ENCODE measurements at regions of chr11 and their contacts with region 1.

Region 1: DNA sequence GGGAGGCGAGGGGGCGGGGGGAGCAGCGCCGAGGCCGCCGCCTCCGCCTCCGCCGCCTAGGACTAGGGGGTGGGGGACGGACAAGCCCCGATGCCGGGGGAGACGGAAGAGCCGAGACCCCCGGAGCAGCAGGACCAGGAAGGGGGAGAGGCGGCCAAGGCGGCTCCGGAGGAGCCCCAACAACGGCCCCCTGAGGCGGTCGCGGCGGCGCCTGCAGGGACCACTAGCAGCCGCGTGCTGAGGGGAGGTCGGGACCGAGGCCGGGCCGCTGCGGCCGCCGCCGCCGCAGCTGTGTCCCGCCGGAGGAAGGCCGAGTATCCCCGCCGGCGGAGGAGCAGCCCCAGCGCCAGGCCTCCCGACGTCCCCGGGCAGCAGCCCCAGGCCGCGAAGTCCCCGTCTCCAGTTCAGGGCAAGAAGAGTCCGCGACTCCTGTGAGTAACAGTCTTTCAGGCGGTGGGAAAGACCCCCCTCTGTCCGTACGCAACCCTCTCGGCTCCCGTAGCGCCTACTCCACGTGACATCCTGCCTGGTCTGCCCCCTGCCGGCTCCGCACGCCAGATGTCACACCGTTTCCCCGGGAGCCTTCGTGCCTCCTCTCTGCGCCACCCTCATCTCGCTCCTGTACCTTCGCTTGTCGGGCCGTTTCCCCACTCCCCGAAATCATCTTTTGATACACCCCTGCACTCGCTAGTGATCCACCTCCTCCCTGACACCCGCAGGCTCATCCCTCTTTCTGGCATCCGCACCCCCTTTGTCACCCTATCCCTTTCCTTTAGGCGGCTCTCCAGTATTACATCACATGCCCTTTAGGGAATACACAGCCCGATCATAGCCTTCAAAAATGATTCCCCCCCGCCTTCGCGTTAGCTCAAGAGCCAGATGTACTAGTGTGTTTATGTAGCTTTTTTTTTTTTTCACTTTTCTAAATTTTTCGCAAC is 598 bp downstream of the ZFP91 start:
- DNase-seq: peak; percentile 90 to 91
- ATAC-seq: peak; percentile 54 to 58
- H3K4me3 ChIP-seq: peak overlapping the region; percentile 85 to 95 (median 94)
- H3K27ac ChIP-seq: peak overlapping the region; percentile 98 to 100 (median 100)
- H3K4me1 ChIP-seq: peaks cover 72 to 73% of the 10 kb centered on the region in 2 donors
- H3K27me3 ChIP-seq: no peaks in the 10 kb centered on the region
- CTCF ChIP-seq: peak; percentile 72 to 93 (median 88)
- POLR2A ChIP-seq: peak; percentile 79 to 80

Region 2: DNA sequence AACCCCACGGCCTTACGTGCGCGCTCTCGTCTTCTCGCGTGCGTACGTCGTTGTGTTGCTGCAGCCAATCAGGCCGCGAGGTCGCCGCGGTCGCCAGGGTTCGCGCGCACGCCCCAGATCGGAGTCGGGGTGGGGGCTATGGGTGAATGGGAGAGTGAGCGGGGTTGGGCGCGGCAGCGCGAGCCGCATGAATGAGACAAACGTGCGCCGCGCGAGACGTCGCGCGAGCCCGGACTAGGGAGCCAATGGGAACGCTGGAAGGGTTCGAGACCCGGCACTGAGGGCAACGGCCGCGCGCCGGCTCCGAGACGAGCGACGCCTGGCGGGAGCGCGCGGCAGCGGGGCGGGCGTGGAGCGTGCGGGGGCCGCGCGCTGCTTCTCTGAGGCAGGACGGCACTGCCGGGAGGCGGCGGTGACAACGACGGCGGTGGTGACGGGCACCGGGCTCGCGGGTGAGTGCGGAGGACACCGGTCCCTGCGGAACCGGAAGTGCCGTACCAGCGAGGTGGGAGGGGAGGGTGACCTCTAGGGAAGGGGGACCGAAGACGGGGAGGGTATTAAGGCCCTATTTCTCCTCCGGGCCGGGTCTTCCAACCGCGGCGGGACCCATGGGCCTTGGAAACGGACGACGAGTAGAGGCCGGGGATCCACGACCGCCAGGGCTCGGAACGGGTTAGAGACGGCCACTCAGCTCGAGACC is 911.6 kb before region 1 on chr11 and contains the start of gene ZDHHC5:
- in situ Hi-C with region 1: loop called in 1 of 4 experiments (anchors 25 kb)
- intact Hi-C with region 1: loop called (anchors 2 kb)
- DNase-seq: peak; percentile 99
- ATAC-seq: peak; percentile 90 to 92
- H3K4me3 ChIP-seq: peak within 1 kb of the TSS; percentile 70 to 85 (median 76)
- H3K27ac ChIP-seq: peak within 1 kb of the TSS; percentile 92 to 97 (median 94)
- H3K4me1 ChIP-seq: peaks cover 19 to 34% of the 10 kb centered on the region in 2 donors
- H3K27me3 ChIP-seq: no peaks in the 10 kb centered on the region
- CTCF ChIP-seq: peak in 4 of 5 experiments; percentile 35 to 79 (median 69)
- POLR2A ChIP-seq: peak; percentile 81 to 85
- total RNA-seq, gene ZDHHC5: 34.0 to 49.2 (median 46.2) TPM

Region 3: DNA sequence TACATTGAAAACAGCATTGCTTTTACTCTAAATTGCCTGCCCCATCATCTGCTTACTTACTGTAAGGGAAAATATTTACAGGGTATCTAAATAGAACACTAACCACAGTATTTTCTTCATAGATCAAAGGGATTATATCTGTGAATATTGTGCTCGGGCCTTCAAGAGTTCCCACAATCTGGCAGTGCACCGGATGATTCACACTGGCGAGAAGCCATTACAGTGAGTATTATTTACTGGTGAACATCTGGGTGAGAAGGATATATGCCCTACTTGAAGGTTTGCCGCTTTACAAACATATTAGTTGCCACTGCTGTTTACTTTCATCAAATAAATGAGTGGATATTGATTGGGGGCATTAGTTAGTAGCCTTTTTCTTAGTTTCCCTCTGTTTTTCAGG is 37.1 kb after region 1 on chr11:
- in situ Hi-C with region 1: loop called in 1 of 4 experiments (anchors 10 kb)
- intact Hi-C with region 1: loop called (anchors 2 kb)
- DNase-seq: peak; percentile 21 to 72
- ATAC-seq: peak; percentile 94 to 95
- H3K4me3 ChIP-seq: no peak overlapping the region
- H3K27ac ChIP-seq: peak overlapping the region; percentile 32 to 53 (median 49)
- H3K4me1 ChIP-seq: peaks cover 0 to 10% of the 10 kb centered on the region in 2 donors
- H3K27me3 ChIP-seq: no peaks in the 10 kb centered on the region
- CTCF ChIP-seq: no peak
- POLR2A ChIP-seq: no peak

Region 4: GRCh38 chr11:58675334-58676155 is 96.1 kb after region 1 on chr11:
- in situ Hi-C with region 1: loop called in 2 of 4 experiments (anchors 10 kb)
- intact Hi-C with region 1: loop called (anchors 1 kb)
- DNase-seq: peak; percentile 23 to 57
- ATAC-seq: peak; percentile 75 to 91
- H3K4me3 ChIP-seq: no peak overlapping the region
- H3K27ac ChIP-seq: no peak overlapping the region
- H3K4me1 ChIP-seq: no peaks in the 10 kb centered on the region
- H3K27me3 ChIP-seq: no peaks in the 10 kb centered on the region
- CTCF ChIP-seq: peak; percentile 69 to 94 (median 78)
- POLR2A ChIP-seq: no peak

Region 5: DNA sequence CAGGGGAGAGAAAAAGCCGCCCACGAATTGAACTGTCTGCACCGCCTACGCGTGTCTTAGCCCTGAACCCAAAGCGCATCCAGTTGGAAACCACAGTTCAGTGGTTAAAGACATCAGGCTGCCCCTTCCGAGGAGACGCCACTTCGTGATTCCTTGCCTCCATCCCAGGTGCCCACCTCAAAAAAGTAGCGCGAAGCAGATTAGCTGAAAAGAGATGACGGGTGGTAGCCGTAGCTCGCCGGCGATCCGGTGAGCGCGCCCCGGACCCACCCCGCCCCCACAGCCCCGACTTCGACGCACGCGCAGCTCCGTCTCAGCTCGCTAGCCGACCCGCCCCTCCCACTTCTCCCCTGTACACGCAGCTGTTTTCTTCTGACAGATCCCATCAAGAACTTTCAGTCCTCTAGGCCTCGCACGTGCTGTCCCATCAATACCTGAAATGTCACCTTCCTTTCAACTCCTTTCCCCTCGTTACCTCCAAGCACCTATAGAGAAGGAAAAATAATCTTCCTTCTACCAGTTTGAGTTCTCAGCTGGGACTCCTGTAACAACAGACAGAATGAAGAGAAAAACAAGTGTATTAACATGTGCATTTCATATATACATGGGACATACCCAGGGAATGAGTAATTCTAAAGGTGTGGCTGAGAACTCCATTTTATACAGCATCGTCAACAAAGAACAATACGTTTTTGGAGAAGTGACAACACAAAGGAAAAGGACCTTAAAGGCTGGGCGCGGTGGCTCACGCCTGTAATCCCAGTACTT is 981.4 kb after region 1 on chr11:
- in situ Hi-C with region 1: no loop called
- intact Hi-C with region 1: loop called (anchors 10 kb)
- DNase-seq: peak; percentile 88
- ATAC-seq: peak; percentile 88 to 90
- H3K4me3 ChIP-seq: peak overlapping the region; percentile 83 to 91 (median 84)
- H3K27ac ChIP-seq: peak overlapping the region; percentile 85 to 88 (median 86)
- H3K4me1 ChIP-seq: peaks cover 6 to 11% of the 10 kb centered on the region in 2 donors
- H3K27me3 ChIP-seq: no peaks in the 10 kb centered on the region
- CTCF ChIP-seq: no peak
- POLR2A ChIP-seq: peak; percentile 39 to 46

Region 6: DNA sequence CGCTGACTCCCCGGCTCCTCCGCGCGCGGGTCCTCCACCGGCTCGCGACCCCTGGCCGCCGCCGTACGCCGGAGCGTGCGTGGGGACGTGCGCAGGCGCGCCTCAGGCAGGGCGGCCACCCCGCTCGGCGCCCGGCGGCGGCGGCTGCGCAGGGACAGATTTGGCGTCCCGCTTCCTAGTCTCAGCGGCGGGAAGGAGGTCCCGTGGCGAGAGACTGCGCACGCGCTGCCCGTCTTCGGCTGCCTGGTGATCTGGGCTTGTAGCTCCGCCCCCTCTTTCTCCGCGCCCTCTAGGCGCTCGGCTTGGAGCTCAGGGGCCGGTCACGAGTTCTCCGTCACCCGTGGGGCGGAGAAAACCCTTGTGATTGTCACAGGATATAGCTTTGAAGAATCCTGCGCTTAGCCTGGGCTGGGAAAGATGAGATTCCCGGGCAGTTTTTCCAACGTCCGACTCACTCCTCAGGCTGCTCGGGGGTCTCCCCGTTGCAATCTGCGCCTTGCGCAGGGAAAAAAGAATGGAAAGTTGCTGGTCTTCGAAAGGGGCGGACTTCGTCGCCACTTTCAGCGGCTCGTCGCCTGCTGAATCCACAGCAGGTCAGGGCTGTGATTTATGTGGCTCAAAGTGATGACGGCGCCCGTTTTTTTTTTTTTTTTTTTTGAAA is 1089.6 kb after region 1 on chr11 and contains the start of gene PATL1:
- in situ Hi-C with region 1: no loop called
- intact Hi-C with region 1: loop called (anchors 5 kb)
- DNase-seq: peak; percentile 100
- ATAC-seq: peak; percentile 93 to 97
- H3K4me3 ChIP-seq: peak within 1 kb of the TSS; percentile 90 to 97 (median 96)
- H3K27ac ChIP-seq: peak within 1 kb of the TSS; percentile 95 to 99 (median 97)
- H3K4me1 ChIP-seq: peaks cover 19 to 26% of the 10 kb centered on the region in 2 donors
- H3K27me3 ChIP-seq: no peaks in the 10 kb centered on the region
- CTCF ChIP-seq: peak in 1 of 5 experiments; percentile 38
- POLR2A ChIP-seq: peak; percentile 90 to 94
- total RNA-seq, gene PATL1: 19.0 to 29.9 (median 26.2) TPM